SK-N-SH (cell line): ENCODE measurements at regions of chr1 and their contacts with region 1.

Region 1: GRCh38 chr1:154145986-154146385 is 8.9 kb downstream of the NUP210L start:
- DNase-seq: no peak
- H3K4me3 ChIP-seq: no peak overlapping the region
- H3K27ac ChIP-seq: no peak overlapping the region
- H3K4me1 ChIP-seq: peaks cover 0 to 3% of the 10 kb centered on the region in 2 experiments; a peak in 1 of 4 replicates
- H3K27me3 ChIP-seq: no peaks in the 10 kb centered on the region
- CTCF ChIP-seq: peak; percentile 65
- EP300 ChIP-seq: no peak
- RAD21 ChIP-seq: no peak

Region 2: GRCh38 chr1:153816283-153816889 is 329.6 kb before region 1 on chr1:
- CTCF ChIA-PET with region 1: no interaction called
- POLR2A ChIA-PET with region 1: no interaction called
- DNase-seq: no peak
- H3K4me3 ChIP-seq: no peak overlapping the region
- H3K27ac ChIP-seq: no peak overlapping the region
- H3K4me1 ChIP-seq: no peaks in the 10 kb centered on the region
- H3K27me3 ChIP-seq: no peaks in the 10 kb centered on the region
- CTCF ChIP-seq: no peak
- EP300 ChIP-seq: no peak
- RAD21 ChIP-seq: no peak

Region 3: GRCh38 chr1:153936011-153936802 is 209.8 kb before region 1 on chr1:
- CTCF ChIA-PET with region 1: no interaction called
- POLR2A ChIA-PET with region 1: no interaction called
- DNase-seq: peak; percentile 4
- H3K4me3 ChIP-seq: no peak overlapping the region
- H3K27ac ChIP-seq: no peak overlapping the region
- H3K4me1 ChIP-seq: no peaks in the 10 kb centered on the region
- H3K27me3 ChIP-seq: no peaks in the 10 kb centered on the region
- CTCF ChIP-seq: no peak
- EP300 ChIP-seq: no peak
- RAD21 ChIP-seq: no peak

Region 4: GRCh38 chr1:154158307-154159125 is 12.5 kb after region 1 on chr1:
- CTCF ChIA-PET with region 1: interaction called, 10 read pairs
- POLR2A ChIA-PET with region 1: interaction called, 5 read pairs
- DNase-seq: no peak
- H3K4me3 ChIP-seq: no peak overlapping the region
- H3K27ac ChIP-seq: no peak overlapping the region
- H3K4me1 ChIP-seq: no peaks in the 10 kb centered on the region
- H3K27me3 ChIP-seq: no peaks in the 10 kb centered on the region
- CTCF ChIP-seq: no peak
- EP300 ChIP-seq: no peak
- RAD21 ChIP-seq: no peak